HEK293 (cell line): ENCODE measurements at regions of chr5 and their contacts with region 1.

Region 1: GRCh38 chr5:14644623-14645237 is 19.8 kb upstream of the OTULIN start:
- H3K4me3 ChIP-seq: no peak overlapping the region
- H3K27ac ChIP-seq: no peak overlapping the region
- H3K4me1 ChIP-seq: no peaks in the 10 kb centered on the region
- CTCF ChIP-seq: no peak

Region 2: DNA sequence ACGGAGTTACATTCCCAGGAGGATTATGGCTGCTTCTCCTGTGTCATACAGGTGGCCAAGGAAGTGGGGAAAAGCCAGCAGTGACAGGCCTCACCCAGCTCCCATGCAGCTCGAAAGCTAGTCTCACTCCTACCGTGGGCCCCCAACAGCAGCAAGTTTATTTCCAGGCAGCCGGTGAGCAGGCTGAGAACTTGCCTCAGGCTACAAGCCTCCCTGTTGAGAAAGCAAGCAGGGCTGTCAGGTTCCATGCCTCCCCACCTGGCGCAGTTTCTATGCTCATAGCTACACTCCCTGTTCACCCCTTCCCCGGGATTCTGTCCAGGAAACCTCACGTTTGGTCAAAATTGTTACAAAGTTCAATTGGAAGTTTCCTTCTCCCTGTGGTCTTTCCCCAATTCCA is 672.7 kb before region 1 on chr5:
- CTCF ChIA-PET with region 1: interaction called, 42 read pairs
- POLR2A ChIA-PET with region 1: no interaction called
- H3K4me3 ChIP-seq: no peak overlapping the region
- H3K27ac ChIP-seq: no peak overlapping the region
- H3K4me1 ChIP-seq: no peaks in the 10 kb centered on the region
- CTCF ChIP-seq: no peak

Region 3: GRCh38 chr5:13987843-13988464 is 656.8 kb before region 1 on chr5:
- CTCF ChIA-PET with region 1: interaction called, 12 read pairs
- POLR2A ChIA-PET with region 1: no interaction called
- H3K4me3 ChIP-seq: no peak overlapping the region
- H3K27ac ChIP-seq: no peak overlapping the region
- H3K4me1 ChIP-seq: no peaks in the 10 kb centered on the region
- CTCF ChIP-seq: peak; percentile 72; the same call in 1 of the 2 replicates

Region 4: GRCh38 chr5:14357441-14357840 is 287.3 kb before region 1 on chr5:
- CTCF ChIA-PET with region 1: interaction called, 20 read pairs
- POLR2A ChIA-PET with region 1: interaction called, 5 read pairs
- H3K4me3 ChIP-seq: no peak overlapping the region
- H3K27ac ChIP-seq: no peak overlapping the region
- H3K4me1 ChIP-seq: no peaks in the 10 kb centered on the region
- CTCF ChIP-seq: no peak

Region 5: DNA sequence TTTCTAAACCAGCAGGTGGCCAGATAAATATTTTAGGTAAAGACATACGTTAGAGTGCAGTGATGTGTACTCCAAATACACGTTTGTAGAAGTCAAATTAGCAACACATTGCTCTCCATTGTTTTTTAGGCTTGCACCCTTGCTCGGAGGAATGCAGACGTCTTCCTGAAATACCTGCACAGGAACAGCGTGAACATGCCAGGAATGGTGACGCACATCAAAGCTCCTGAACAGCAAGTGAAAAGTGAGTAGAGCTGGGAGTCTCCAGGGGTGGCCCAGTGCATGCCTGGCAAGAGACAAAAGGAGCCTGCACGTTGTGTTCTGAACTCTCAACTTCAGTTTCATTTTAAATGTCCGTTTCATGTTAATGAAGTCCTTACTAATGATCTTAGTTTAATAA is 270.6 kb before region 1 on chr5:
- CTCF ChIA-PET with region 1: interaction called, 12 read pairs
- POLR2A ChIA-PET with region 1: no interaction called
- H3K4me3 ChIP-seq: no peak overlapping the region
- H3K27ac ChIP-seq: no peak overlapping the region
- H3K4me1 ChIP-seq: no peaks in the 10 kb centered on the region
- CTCF ChIP-seq: no peak

Region 6: DNA sequence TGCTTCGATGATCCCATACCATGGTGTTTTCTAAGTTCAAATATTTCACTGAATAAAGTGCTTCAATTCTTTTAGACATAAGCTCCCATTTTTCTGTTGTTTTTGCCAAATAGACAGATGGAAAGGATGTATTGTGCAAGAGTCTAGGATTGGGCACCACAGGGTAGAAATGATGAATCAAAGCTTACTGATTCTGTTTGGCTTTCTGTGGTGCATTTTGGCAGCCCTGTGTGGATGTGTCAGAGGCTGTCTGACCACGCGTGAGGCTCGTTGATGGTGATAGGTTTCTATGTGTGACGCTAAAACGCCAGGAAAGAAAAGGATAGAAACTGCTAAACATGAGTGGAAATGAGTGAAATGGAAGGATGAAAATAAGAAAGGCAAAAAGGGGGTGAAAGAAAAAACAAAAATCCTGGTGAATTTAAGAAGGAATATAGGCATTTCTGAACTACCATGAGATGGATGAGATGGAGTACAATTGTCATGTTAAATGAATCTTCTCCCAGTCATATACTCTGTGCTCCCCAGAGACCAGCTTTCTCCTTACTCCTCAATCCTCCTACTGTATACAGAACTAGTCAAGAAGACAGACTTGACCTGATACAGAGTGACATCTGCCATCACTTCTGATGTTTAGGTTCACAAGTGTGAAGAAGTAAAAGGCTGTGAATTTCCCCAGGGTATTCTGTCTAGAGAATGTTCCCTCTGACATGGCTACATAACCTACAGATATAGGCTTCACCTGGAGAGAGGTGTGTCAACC is 172.4 kb after region 1 on chr5:
- CTCF ChIA-PET with region 1: no interaction called
- POLR2A ChIA-PET with region 1: no interaction called
- H3K4me3 ChIP-seq: no peak overlapping the region
- H3K27ac ChIP-seq: no peak overlapping the region
- H3K4me1 ChIP-seq: peaks cover 3% of the 10 kb centered on the region; the same call in 1 of the 2 replicates
- CTCF ChIP-seq: no peak